Pancreas (tissue), 10 donors: ENCODE measurements at regions of chr10 and their contacts with region 1.

Region 1: DNA sequence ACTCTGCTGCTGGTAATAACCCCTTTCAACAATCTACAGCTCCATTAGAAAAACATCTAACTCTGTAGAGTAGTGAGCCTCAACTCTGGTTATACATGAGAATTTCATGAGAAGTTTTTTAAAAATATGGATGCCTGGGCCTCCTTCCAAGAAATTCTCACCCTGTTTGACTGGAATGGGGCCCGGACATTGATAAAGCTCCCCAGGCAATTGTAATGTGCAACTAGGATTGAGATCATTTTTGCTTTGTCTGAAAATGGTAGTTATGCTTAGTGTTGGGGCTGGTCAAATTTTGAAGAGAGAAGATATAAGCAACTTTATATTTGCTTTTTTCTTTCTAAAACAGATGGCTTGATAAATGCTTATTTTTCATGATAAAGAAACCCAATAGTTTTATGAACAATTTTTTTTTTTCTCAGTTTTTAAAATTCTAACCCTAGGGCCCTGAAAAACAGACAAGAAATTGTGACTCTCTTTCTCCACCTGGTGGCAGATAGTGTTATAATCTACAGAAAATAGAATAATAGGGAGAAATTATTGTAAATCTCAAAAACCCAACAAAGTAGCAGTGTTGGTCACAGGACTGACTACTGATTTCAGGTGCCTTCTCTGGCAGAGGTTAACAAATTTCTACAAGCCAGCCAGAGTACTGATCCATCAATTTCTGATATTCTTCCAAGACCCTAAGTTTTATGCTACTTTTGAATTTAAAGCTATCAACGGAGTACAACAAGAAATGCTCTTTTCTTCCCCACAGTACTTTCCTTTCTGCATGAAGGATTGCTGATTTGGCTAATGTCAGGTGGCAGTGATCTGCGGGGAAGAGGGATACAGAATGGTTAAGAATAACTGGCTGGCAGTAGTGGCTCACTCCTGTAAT is 174.8 kb downstream of the DKK1 start:
- DNase-seq: no peak
- ATAC-seq: peak in 3 of 4 donors; percentile 58 to 68 (median 66)
- H3K4me3 ChIP-seq: no peak overlapping the region
- H3K27ac ChIP-seq: no peak overlapping the region
- H3K4me1 ChIP-seq: no peaks in the 10 kb centered on the region
- H3K27me3 ChIP-seq: no peaks in the 10 kb centered on the region
- CTCF ChIP-seq: peak; percentile 7 to 46 (median 40)

Region 2: DNA sequence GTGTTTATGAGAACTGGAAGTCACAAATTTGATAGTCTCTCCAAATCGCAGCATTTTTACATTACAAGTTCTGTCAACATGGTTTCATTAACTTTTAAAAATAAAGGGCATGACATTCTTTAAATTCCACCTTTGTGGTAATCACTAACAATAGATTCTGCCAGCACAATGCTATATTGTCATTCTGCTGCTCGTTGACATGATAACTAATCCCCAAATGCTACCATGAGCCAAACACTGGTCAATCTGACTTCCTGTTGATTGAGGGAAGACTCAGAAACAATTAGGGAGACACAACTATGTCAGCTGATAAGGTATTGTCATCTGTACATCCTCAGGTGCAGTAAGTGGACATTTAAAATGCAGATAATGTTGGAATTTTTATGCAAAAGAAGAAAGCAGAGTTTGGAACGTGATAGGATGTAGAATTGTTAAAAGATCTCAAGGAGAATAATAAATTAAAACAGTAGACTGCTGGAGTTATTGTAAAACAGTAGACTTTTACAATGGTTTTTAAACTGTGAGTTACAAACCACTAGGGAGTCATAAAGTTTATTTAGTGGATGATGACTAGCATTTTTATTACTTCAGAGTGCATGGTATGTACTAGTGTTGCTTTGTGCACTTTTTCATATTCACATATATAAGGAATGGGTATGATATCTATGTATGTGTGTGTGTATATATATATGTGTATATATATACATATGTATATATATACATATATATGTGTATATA is 301.2 kb before region 1 on chr10:
- intact Hi-C with region 1: no loop called
- DNase-seq: no peak
- ATAC-seq: no peak
- H3K4me3 ChIP-seq: no peak overlapping the region
- H3K27ac ChIP-seq: no peak overlapping the region
- H3K4me1 ChIP-seq: no peaks in the 10 kb centered on the region
- H3K27me3 ChIP-seq: no peaks in the 10 kb centered on the region
- CTCF ChIP-seq: no peak

Region 3: GRCh38 chr10:52313933-52314816 is 174.7 kb before region 1 on chr10 and contains the start of gene DKK1:
- intact Hi-C with region 1: loop called in 2 of 3 experiments (anchors 5 to 10 kb)
- DNase-seq: peak; percentile 35 to 88 (median 57)
- ATAC-seq: peak; percentile 90 to 96 (median 94)
- H3K4me3 ChIP-seq: peak within 1 kb of the TSS; percentile 18 to 44 (median 27)
- H3K27ac ChIP-seq: no peak within 1 kb of the TSS
- H3K4me1 ChIP-seq: no peaks in the 10 kb centered on the region
- H3K27me3 ChIP-seq: peaks cover 0 to 24% (median 2%) of the 10 kb centered on the region in 4 donors
- CTCF ChIP-seq: peak; percentile 40 to 66 (median 61)
- total RNA-seq, gene DKK1: 0.66 to 1.3 (median 0.92) TPM in 3 of 6 donors, not detected in the others

Region 4: GRCh38 chr10:52332815-52333214 is 156.0 kb before region 1 on chr10:
- intact Hi-C with region 1: no loop called
- DNase-seq: no peak
- ATAC-seq: no peak
- H3K4me3 ChIP-seq: no peak overlapping the region
- H3K27ac ChIP-seq: no peak overlapping the region
- H3K4me1 ChIP-seq: peaks cover 0 to 4% (median 0%) of the 10 kb centered on the region in 3 donors
- H3K27me3 ChIP-seq: no peaks in the 10 kb centered on the region
- CTCF ChIP-seq: no peak